ENCODE measurements at regions of chr12 and their contacts with region 1.

Region 1: GRCh38 chr12:94545935-94546771 is 86.5 kb upstream of the CEP83 start:
- DNase-seq: peak; percentile 67 to 70
- H3K4me3 ChIP-seq: no peak overlapping the region
- H3K27ac ChIP-seq: no peak overlapping the region
- H3K4me1 ChIP-seq: peaks cover 0 to 7% of the 10 kb centered on the region in 2 donors
- H3K27me3 ChIP-seq: no peaks in the 10 kb centered on the region
- CTCF ChIP-seq: peak; percentile 60 to 97 (median 89)
- POLR2A ChIP-seq: no peak

Region 2: GRCh38 chr12:94762259-94762942 is 216.2 kb after region 1 on chr12:
- intact Hi-C with region 1: loop called (anchors 2 kb)
- DNase-seq: no peak
- H3K4me3 ChIP-seq: no peak overlapping the region
- H3K27ac ChIP-seq: peak overlapping the region; percentile 50 to 90 (median 63)
- H3K4me1 ChIP-seq: peaks cover 0 to 14% of the 10 kb centered on the region in 2 donors
- H3K27me3 ChIP-seq: no peaks in the 10 kb centered on the region
- CTCF ChIP-seq: no peak
- POLR2A ChIP-seq: no peak

Region 3: GRCh38 chr12:94980577-94980976 is 434.4 kb after region 1 on chr12:
- intact Hi-C with region 1: loop called (anchors 5 kb)
- DNase-seq: no peak
- H3K4me3 ChIP-seq: no peak overlapping the region
- H3K27ac ChIP-seq: no peak overlapping the region
- H3K4me1 ChIP-seq: peaks cover 0 to 3% of the 10 kb centered on the region in 2 donors
- H3K27me3 ChIP-seq: no peaks in the 10 kb centered on the region
- CTCF ChIP-seq: peak in 4 of 6 experiments; percentile 8 to 57 (median 48)
- POLR2A ChIP-seq: no peak

Measured in thyroid gland (tissue), 4 donors.